Prostate gland (tissue), 2 donors: ENCODE measurements at regions of chr11 and their contacts with region 1.

Region 1: DNA sequence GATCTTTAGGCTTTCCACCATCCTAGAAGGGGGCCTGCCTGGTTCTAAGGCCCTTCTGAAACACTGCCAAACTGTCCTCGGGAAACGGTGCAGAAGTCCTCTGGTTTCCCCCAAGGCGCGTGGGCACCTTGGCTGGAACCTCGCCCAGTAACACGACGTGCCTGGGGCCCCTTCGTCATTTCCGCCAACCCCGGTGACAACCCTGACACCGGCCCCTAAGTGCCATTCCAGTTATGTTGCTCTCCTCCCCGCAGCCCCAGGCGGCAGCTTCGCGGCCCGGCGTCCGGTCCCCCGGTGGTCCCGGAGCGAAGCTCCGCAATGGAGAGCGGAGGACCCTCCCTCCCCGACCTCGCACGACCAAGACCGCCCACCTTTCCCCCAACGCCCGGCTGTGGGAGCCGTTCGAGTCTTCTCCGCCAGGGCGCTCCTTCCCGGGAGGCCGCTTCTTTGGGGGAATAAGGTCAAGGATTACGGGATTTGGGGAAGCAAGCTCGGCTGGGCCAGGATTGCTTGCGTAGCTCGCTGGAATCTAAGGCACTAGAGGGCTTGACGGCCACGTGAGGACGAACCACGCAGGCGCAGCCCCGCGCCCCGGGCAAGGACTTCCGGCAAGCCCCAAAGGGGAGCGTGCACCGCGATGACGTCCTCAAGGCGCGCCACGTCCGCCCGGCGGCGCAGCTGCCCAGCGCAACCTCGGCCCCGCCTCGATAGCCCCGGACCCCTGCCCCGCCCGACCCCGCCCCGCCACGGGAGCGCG is 626 bp downstream of the RNH1 start:
- DNase-seq: peak; percentile 95
- H3K4me3 ChIP-seq: peak overlapping the region; percentile 79 to 92
- H3K27ac ChIP-seq: peak overlapping the region; percentile 99
- H3K4me1 ChIP-seq: peaks cover 14% of the 10 kb centered on the region
- H3K27me3 ChIP-seq: no peaks in the 10 kb centered on the region
- CTCF ChIP-seq: peak in 2 of 4 experiments; percentile 32 to 35
- POLR2A ChIP-seq: peak; percentile 50

Region 2: GRCh38 chr11:236774-237767 is 269.3 kb before region 1 on chr11 and contains the start of gene PSMD13:
- intact Hi-C with region 1: loop called (anchors 10 kb)
- DNase-seq: peak; percentile 81
- H3K4me3 ChIP-seq: peak within 1 kb of the TSS; percentile 90 to 95
- H3K27ac ChIP-seq: peak within 1 kb of the TSS; percentile 98
- H3K4me1 ChIP-seq: peaks cover 12% of the 10 kb centered on the region
- H3K27me3 ChIP-seq: no peaks in the 10 kb centered on the region
- CTCF ChIP-seq: peak in 1 of 4 experiments; percentile 16
- POLR2A ChIP-seq: peak; percentile 37
- total RNA-seq, gene PSMD13: 87.4 to 129 TPM

Region 3: GRCh38 chr11:370087-371055 is 136.0 kb before region 1 on chr11:
- intact Hi-C with region 1: no loop called
- DNase-seq: no peak
- H3K4me3 ChIP-seq: peak overlapping the region in 1 of 2 donors; percentile 5
- H3K27ac ChIP-seq: no peak overlapping the region
- H3K4me1 ChIP-seq: no peaks in the 10 kb centered on the region
- H3K27me3 ChIP-seq: no peaks in the 10 kb centered on the region
- CTCF ChIP-seq: no peak
- POLR2A ChIP-seq: no peak

Region 4: GRCh38 chr11:406978-407739 is 99.3 kb before region 1 on chr11:
- intact Hi-C with region 1: loop called (anchors 5 kb)
- DNase-seq: peak; percentile 61
- H3K4me3 ChIP-seq: peak overlapping the region; percentile 35 to 53
- H3K27ac ChIP-seq: peak overlapping the region; percentile 53 to 73
- H3K4me1 ChIP-seq: peaks cover 9% of the 10 kb centered on the region
- H3K27me3 ChIP-seq: no peaks in the 10 kb centered on the region
- CTCF ChIP-seq: no peak
- POLR2A ChIP-seq: peak; percentile 18

Region 5: GRCh38 chr11:450809-451531 is 55.4 kb before region 1 on chr11:
- intact Hi-C with region 1: no loop called
- DNase-seq: peak; percentile 69
- H3K4me3 ChIP-seq: peak overlapping the region; percentile 95 to 96
- H3K27ac ChIP-seq: peak overlapping the region; percentile 73 to 94
- H3K4me1 ChIP-seq: peaks cover 6% of the 10 kb centered on the region
- H3K27me3 ChIP-seq: no peaks in the 10 kb centered on the region
- CTCF ChIP-seq: peak in 2 of 4 experiments; percentile 31 to 48
- POLR2A ChIP-seq: no peak

Region 6: GRCh38 chr11:870127-870413 is 363.7 kb after region 1 on chr11:
- intact Hi-C with region 1: no loop called
- DNase-seq: no peak
- H3K4me3 ChIP-seq: no peak overlapping the region
- H3K27ac ChIP-seq: no peak overlapping the region
- H3K4me1 ChIP-seq: no peaks in the 10 kb centered on the region
- H3K27me3 ChIP-seq: no peaks in the 10 kb centered on the region
- CTCF ChIP-seq: no peak
- POLR2A ChIP-seq: no peak